ENCODE measurements at regions of chr4 and their contacts with region 1.

Region 1: DNA sequence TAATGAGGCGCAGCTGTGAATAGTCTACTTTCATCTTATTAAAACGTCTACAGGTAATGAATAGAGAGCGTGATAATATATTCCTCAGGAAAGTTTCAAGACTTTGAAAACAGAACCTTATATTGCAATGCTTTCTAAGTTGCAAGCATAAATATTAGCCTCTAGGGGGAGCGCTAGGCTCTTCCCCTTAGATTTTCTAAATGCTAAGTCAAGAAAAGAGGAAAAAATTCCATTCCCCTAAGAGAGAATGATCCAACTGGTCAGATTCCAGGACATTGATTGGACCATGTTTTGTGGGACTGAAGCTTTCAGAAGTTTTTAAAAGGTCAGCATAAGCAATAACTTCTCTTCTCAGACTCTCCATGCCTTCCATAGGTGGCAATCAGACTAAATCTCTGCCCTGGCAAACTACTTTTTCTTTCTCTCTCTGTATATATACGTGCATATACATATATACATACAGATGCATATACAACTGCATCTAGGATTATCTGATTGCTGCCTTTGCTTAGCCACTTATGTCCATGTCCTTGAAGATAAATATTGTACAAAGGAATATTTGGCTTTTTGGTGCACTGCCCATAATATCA is 492.9 kb downstream of the INPP4B start:
- DNase-seq: no peak
- H3K4me3 ChIP-seq: no peak overlapping the region
- H3K27ac ChIP-seq: peak overlapping the region in 3 of 8 donors; percentile 24 to 72 (median 31)
- H3K4me1 ChIP-seq: peaks cover 25 to 68% (median 36%) of the 10 kb centered on the region in 6 donors
- H3K27me3 ChIP-seq: no peaks in the 10 kb centered on the region
- CTCF ChIP-seq: peak in 9 of 11 experiments; percentile 51 to 84 (median 78)
- POLR2A ChIP-seq: no peak

Region 2: GRCh38 chr4:142728233-142728632 is 375.0 kb after region 1 on chr4:
- intact Hi-C with region 1: loop called (anchors 5 kb)
- DNase-seq: no peak
- H3K4me3 ChIP-seq: no peak overlapping the region
- H3K27ac ChIP-seq: no peak overlapping the region
- H3K4me1 ChIP-seq: no peaks in the 10 kb centered on the region
- H3K27me3 ChIP-seq: no peaks in the 10 kb centered on the region
- CTCF ChIP-seq: no peak
- POLR2A ChIP-seq: no peak

Region 3: GRCh38 chr4:142846729-142847596 is 493.7 kb after region 1 on chr4:
- intact Hi-C with region 1: loop called (anchors 10 kb)
- DNase-seq: peak; percentile 71
- H3K4me3 ChIP-seq: peak overlapping the region; percentile 44 to 76 (median 51)
- H3K27ac ChIP-seq: peak overlapping the region; percentile 39 to 79 (median 68)
- H3K4me1 ChIP-seq: peaks cover 11 to 41% (median 22%) of the 10 kb centered on the region in 6 donors
- H3K27me3 ChIP-seq: peaks cover 0 to 55% (median 26%) of the 10 kb centered on the region in 7 donors
- CTCF ChIP-seq: peak in 5 of 11 experiments; percentile 6 to 36 (median 29)
- POLR2A ChIP-seq: no peak

Region 4: DNA sequence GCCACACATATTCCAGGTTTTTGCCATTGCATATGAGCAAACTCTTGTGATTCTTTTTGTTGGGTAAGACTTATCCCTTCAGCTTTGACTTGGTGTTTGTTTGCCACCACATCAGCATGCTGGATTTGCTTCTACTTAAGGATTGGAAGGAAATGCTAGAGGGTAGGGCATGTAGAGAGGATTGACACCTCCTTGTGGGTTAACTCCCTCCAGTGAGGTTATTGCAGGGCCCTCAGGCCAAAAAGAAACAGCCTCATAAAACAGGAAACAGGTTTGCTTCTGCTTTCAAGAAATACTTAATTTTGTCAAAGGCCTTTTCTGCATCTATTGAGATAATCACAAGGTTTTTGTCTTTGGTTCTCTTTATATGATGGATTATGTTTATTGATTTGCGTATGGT is 508.1 kb after region 1 on chr4:
- intact Hi-C with region 1: no loop called
- DNase-seq: no peak
- H3K4me3 ChIP-seq: no peak overlapping the region
- H3K27ac ChIP-seq: no peak overlapping the region
- H3K4me1 ChIP-seq: no peaks in the 10 kb centered on the region
- H3K27me3 ChIP-seq: peaks cover 0 to 10% (median 0%) of the 10 kb centered on the region in 7 donors
- CTCF ChIP-seq: no peak
- POLR2A ChIP-seq: no peak

Measured in spleen (tissue), 13 donors.